Esophagus muscularis mucosa (tissue), 4 donors: ENCODE measurements at regions of chr5 and their contacts with region 1.

Region 1: GRCh38 chr5:157761690-157762621 is 18.4 kb downstream of the LSM11 start:
- DNase-seq: no peak
- H3K4me3 ChIP-seq: no peak overlapping the region
- H3K27ac ChIP-seq: peak overlapping the region in 2 of 4 donors; percentile 15 to 36
- H3K4me1 ChIP-seq: peaks cover 0 to 18% (median 16%) of the 10 kb centered on the region in 4 donors
- H3K27me3 ChIP-seq: no peaks in the 10 kb centered on the region
- CTCF ChIP-seq: peak; percentile 71 to 81 (median 78)
- EP300 ChIP-seq: no peak
- POLR2A ChIP-seq: no peak

Region 2: DNA sequence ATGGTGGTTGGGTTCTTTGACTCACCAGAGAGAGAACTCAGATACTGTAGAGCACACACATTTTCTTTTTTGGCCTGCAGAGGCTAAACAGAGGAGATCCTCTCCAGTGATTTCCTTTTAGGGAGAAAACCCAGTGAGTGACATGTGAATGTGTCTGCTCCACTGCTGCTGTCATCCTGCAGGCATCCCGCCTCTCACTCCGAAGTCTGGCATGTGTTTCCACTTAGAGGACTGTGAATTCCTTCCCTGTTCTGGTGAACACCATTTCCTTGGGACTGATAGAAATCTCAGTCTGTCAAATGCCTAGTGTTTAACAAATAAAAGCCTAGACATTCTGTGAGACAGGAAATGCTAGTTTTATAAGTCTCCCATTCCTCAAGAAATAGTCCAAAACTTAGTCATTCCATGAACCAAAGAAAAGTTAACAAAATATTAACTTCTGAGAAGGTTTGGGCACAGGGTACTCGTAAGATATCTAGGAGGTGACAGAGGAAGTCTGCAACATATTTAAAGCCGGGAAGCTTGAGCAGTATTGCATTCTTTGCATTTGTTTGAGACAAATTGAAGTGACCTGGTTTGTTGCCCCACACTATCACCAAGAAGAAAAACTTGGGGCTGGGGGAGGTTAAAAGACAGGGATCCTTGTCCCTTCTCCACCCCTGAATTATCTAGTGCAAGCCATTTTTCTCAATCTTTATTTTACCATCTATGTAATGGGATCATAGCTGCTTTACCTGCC is 376.8 kb before region 1 on chr5:
- intact Hi-C with region 1: no loop called
- DNase-seq: peak; percentile 60
- H3K4me3 ChIP-seq: peak overlapping the region in 1 of 4 donors; percentile 32
- H3K27ac ChIP-seq: peak overlapping the region; percentile 85 to 92 (median 88)
- H3K4me1 ChIP-seq: peaks cover 17 to 85% (median 73%) of the 10 kb centered on the region in 4 donors
- H3K27me3 ChIP-seq: no peaks in the 10 kb centered on the region
- CTCF ChIP-seq: no peak
- EP300 ChIP-seq: peak; percentile 4
- POLR2A ChIP-seq: no peak

Region 3: GRCh38 chr5:157596487-157596886 is 165.5 kb before region 1 on chr5:
- intact Hi-C with region 1: no loop called
- DNase-seq: no peak
- H3K4me3 ChIP-seq: no peak overlapping the region
- H3K27ac ChIP-seq: no peak overlapping the region
- H3K4me1 ChIP-seq: peaks cover 0 to 7% (median 5%) of the 10 kb centered on the region in 4 donors
- H3K27me3 ChIP-seq: no peaks in the 10 kb centered on the region
- CTCF ChIP-seq: no peak
- EP300 ChIP-seq: no peak
- POLR2A ChIP-seq: no peak

Region 4: GRCh38 chr5:157799578-157799977 is 37.6 kb after region 1 on chr5:
- intact Hi-C with region 1: no loop called
- DNase-seq: no peak
- H3K4me3 ChIP-seq: no peak overlapping the region
- H3K27ac ChIP-seq: no peak overlapping the region
- H3K4me1 ChIP-seq: no peaks in the 10 kb centered on the region
- H3K27me3 ChIP-seq: no peaks in the 10 kb centered on the region
- CTCF ChIP-seq: no peak
- EP300 ChIP-seq: no peak
- POLR2A ChIP-seq: no peak

Region 5: GRCh38 chr5:157994906-157995519 is 233.1 kb after region 1 on chr5:
- intact Hi-C with region 1: loop called (anchors 5 kb)
- DNase-seq: no peak
- H3K4me3 ChIP-seq: no peak overlapping the region
- H3K27ac ChIP-seq: no peak overlapping the region
- H3K4me1 ChIP-seq: peaks cover 3 to 21% (median 9%) of the 10 kb centered on the region in 4 donors
- H3K27me3 ChIP-seq: no peaks in the 10 kb centered on the region
- CTCF ChIP-seq: peak; percentile 81 to 84 (median 82)
- EP300 ChIP-seq: no peak
- POLR2A ChIP-seq: no peak